HepG2 (cell line): ENCODE measurements at regions of chr9 and their contacts with region 1.

Region 1: DNA sequence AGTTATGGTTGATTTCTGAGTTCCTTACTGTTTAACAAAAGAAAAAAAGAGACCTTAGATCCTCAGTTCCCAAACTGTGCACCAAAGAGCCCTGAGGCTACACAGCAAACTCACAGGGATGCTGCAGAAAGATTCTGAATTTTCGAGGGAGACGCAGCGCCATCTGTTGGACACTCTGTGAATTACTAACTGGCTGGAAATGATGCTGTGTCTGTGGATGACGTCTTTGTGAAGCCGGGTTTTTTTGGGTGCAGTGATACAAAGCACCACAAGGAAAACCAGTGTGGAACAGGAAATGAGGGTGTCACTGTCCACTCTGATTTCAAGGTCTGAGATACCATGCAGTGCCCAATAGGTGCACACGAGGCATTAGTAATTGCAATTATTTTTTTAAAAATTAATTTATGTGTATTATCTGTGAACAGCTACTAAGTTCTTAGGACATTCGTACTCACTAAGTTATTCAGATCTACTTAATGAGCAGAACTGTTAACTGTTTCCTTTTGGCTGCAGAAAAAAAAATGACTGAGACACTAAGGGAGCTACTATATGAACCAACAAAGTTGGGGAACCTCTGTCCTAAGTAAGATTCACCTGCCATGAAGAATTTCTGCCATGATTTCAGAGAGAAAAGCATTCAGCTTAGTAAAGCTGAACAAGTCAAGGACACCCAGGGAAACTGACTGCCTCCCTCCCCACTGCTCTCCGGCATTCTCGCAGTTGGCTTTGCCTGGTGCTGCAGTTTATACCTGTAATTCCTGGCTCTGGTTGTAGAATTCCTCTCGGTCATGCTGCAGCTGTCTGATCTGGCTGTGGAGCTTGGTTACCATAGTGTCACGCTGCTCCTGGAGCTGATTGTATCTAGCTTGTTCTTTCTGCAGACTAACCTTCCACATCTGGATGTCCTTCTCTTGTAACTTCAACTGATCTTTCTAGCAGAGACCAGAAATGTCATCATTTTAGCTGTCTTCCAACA is 23.4 kb downstream of the SPACA9 start:
- DNase-seq: peak; percentile 75
- ATAC-seq: peak; percentile 95
- H3K4me3 ChIP-seq: no peak overlapping the region
- H3K27ac ChIP-seq: no peak overlapping the region
- H3K4me1 ChIP-seq: no peaks in the 10 kb centered on the region
- H3K27me3 ChIP-seq: no peaks in the 10 kb centered on the region
- CTCF ChIP-seq: peak; percentile 85
- EP300 ChIP-seq: no peak
- POLR2A ChIP-seq: no peak
- RAD21 ChIP-seq: 0 out of 2 replicates have a peak, but pooled peaks have one; percentile 40

Region 2: GRCh38 chr9:132679946-132680625 is 222.1 kb before region 1 on chr9:
- CTCF ChIA-PET with region 1: no interaction called
- POLR2A ChIA-PET with region 1: no interaction called
- in situ Hi-C with region 1: no loop called
- intact Hi-C with region 1: no loop called
- DNase-seq: no peak
- ATAC-seq: no peak
- H3K4me3 ChIP-seq: no peak overlapping the region
- H3K27ac ChIP-seq: no peak overlapping the region
- H3K4me1 ChIP-seq: no peaks in the 10 kb centered on the region
- H3K27me3 ChIP-seq: no peaks in the 10 kb centered on the region
- CTCF ChIP-seq: no peak
- EP300 ChIP-seq: no peak
- POLR2A ChIP-seq: no peak
- RAD21 ChIP-seq: no peak

Region 3: DNA sequence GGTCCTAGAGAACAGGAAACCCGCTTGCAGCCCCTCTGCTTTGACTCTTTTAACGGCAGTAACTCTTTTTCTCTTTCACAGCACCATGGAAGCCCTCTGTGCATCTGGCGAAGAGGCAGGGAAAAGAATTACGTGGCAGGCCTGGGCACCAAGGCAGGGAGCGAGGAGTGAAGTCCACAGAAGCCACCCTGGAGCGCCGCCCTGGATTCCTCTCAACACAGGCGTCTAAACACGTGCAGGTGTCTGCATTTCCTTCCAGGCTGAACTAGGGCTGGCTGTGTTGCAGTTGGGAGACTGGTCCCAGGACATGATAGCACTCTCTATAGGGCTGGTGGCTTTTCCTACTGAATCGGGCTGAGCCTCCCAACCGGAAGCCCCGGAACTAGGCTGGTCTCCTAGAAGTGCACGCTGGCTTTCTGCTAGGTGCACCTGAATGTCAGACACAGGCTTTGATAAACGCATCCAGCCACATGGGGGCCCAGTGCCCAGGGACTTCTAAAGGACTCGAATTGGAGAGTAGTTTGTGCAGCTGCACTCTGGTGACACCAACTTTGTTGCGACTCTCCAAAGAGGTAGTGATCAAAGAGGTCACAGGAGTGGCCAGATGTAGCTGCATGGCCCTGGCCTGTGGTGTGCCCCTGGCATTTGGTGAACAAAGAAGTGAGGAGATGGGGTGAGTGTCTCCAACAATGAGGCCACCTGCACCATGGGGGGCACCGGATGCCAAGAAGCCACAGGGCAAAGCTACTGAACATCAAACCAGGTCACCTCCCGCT is 78.6 kb before region 1 on chr9:
- CTCF ChIA-PET with region 1: no interaction called
- POLR2A ChIA-PET with region 1: no interaction called
- in situ Hi-C with region 1: no loop called
- intact Hi-C with region 1: loop called (anchors 5 kb)
- DNase-seq: peak; percentile 29
- ATAC-seq: peak; percentile 93
- H3K4me3 ChIP-seq: peak overlapping the region in 1 of 3 experiments; percentile 43; a peak in 1 of 6 replicates
- H3K27ac ChIP-seq: no peak overlapping the region
- H3K4me1 ChIP-seq: no peaks in the 10 kb centered on the region
- H3K27me3 ChIP-seq: peaks cover 5 to 31% of the 10 kb centered on the region in 2 experiments; a peak in 3 of 5 replicates
- CTCF ChIP-seq: peak; percentile 45
- EP300 ChIP-seq: no peak
- POLR2A ChIP-seq: no peak
- RAD21 ChIP-seq: no peak

Region 4: GRCh38 chr9:132833550-132834121 is 68.5 kb before region 1 on chr9:
- CTCF ChIA-PET with region 1: no interaction called
- POLR2A ChIA-PET with region 1: no interaction called
- in situ Hi-C with region 1: no loop called
- intact Hi-C with region 1: no loop called
- DNase-seq: no peak
- ATAC-seq: no peak
- H3K4me3 ChIP-seq: no peak overlapping the region
- H3K27ac ChIP-seq: no peak overlapping the region
- H3K4me1 ChIP-seq: no peaks in the 10 kb centered on the region
- H3K27me3 ChIP-seq: peaks cover 0 to 6% of the 10 kb centered on the region in 2 experiments; a peak in 3 of 5 replicates
- CTCF ChIP-seq: no peak
- EP300 ChIP-seq: no peak
- POLR2A ChIP-seq: no peak
- RAD21 ChIP-seq: no peak

Region 5: DNA sequence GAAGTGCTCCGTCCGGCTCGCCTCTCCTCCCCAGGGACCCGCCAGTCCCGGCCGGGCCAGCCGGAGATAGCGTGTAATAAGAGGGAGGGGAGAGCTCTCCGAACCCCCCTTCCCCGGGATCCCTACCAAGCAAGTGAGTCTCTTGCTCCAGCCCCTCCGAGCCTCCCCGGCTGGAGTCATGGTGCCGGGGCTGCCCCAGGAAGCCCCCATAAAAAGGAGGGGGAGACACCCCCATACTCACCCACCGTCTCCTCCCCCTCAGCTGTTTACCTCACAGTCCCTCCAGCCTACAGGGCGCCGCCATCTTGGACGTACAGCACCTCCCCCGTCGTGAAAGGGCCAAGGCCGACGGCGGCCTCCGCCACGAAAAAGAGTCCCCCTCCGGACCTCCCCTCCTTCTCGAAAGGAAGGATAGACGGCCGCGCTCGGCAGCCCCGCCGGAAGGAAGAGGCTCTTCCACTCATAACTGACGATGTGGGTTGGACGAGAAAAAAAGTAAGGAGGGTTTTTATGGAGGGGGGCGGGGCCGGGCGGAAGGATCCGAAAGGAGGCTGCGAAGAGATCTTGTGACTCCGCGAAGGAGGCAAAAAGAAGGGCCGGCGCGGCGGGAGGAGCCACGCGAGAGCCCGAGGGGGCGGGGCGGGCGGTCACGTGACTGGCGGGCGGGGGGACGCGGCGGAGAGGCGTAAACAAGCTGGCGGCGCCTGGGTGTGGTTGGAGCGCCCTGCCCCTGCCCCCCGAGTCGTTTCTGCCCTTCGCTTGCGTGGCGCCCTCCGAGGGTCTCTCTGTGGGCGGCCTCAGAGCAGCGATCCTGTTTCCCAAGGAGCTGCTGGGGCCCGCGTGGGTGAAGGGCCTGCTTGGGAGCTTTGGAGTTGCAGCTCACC is 42.4 kb after region 1 on chr9 and contains the start of gene TSC1:
- CTCF ChIA-PET with region 1: no interaction called
- POLR2A ChIA-PET with region 1: no interaction called
- in situ Hi-C with region 1: no loop called
- intact Hi-C with region 1: no loop called
- DNase-seq: peak; percentile 83
- ATAC-seq: peak; percentile 86
- H3K4me3 ChIP-seq: peak within 1 kb of the TSS; percentile 86 to 100 (median 95)
- H3K27ac ChIP-seq: peak within 1 kb of the TSS; percentile 99
- H3K4me1 ChIP-seq: peaks cover 62% of the 10 kb centered on the region
- H3K27me3 ChIP-seq: peaks cover 0 to 3% of the 10 kb centered on the region in 2 experiments; a peak in 2 of 5 replicates
- CTCF ChIP-seq: 0 out of 2 replicates have a peak, but pooled peaks have one; percentile 7
- EP300 ChIP-seq: peak in 1 of 2 experiments; percentile 64; a peak in 1 of 4 replicates
- POLR2A ChIP-seq: peak; percentile 75 to 84
- RAD21 ChIP-seq: no peak
- total RNA-seq, gene TSC1: 26.3 and 31.6 TPM in 2 replicates